ENCODE measurements at regions of chr9 and their contacts with region 1.

Region 1: GRCh38 chr9:114717908-114718486 is 36.0 kb upstream of the TEX48 start:
- DNase-seq: no peak
- H3K4me3 ChIP-seq: no peak overlapping the region
- H3K27ac ChIP-seq: no peak overlapping the region
- H3K4me1 ChIP-seq: no peaks in the 10 kb centered on the region
- H3K27me3 ChIP-seq: no peaks in the 10 kb centered on the region
- CTCF ChIP-seq: no peak
- POLR2A ChIP-seq: no peak

Region 2: GRCh38 chr9:114321759-114322158 is 396.2 kb before region 1 on chr9:
- intact Hi-C with region 1: no loop called
- DNase-seq: no peak
- H3K4me3 ChIP-seq: no peak overlapping the region
- H3K27ac ChIP-seq: no peak overlapping the region
- H3K4me1 ChIP-seq: no peaks in the 10 kb centered on the region
- H3K27me3 ChIP-seq: no peaks in the 10 kb centered on the region
- CTCF ChIP-seq: no peak
- POLR2A ChIP-seq: no peak

Region 3: DNA sequence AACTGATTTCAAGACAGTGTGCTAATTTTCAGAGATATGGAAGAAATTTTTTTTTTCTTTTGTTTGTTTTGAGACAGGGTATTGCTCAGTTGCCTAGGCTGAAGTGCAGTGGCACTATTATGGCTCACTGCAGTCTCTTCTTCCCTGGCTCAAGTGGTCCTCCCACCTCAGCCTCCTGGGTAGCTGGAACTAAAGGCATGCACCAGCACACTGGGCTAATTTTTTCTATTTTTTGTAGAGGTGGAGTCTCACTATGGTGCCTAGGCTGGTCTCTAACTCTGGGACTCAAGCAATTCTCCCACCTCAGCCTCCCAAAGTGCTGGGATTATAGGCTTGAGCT is 26.1 kb before region 1 on chr9:
- intact Hi-C with region 1: loop called (anchors 1 kb)
- DNase-seq: no peak
- H3K4me3 ChIP-seq: no peak overlapping the region
- H3K27ac ChIP-seq: no peak overlapping the region
- H3K4me1 ChIP-seq: no peaks in the 10 kb centered on the region
- H3K27me3 ChIP-seq: no peaks in the 10 kb centered on the region
- CTCF ChIP-seq: no peak
- POLR2A ChIP-seq: no peak